Dorsolateral prefrontal cortex (tissue), 120 donors: ENCODE measurements at regions of chr9 and their contacts with region 1.

Region 1: DNA sequence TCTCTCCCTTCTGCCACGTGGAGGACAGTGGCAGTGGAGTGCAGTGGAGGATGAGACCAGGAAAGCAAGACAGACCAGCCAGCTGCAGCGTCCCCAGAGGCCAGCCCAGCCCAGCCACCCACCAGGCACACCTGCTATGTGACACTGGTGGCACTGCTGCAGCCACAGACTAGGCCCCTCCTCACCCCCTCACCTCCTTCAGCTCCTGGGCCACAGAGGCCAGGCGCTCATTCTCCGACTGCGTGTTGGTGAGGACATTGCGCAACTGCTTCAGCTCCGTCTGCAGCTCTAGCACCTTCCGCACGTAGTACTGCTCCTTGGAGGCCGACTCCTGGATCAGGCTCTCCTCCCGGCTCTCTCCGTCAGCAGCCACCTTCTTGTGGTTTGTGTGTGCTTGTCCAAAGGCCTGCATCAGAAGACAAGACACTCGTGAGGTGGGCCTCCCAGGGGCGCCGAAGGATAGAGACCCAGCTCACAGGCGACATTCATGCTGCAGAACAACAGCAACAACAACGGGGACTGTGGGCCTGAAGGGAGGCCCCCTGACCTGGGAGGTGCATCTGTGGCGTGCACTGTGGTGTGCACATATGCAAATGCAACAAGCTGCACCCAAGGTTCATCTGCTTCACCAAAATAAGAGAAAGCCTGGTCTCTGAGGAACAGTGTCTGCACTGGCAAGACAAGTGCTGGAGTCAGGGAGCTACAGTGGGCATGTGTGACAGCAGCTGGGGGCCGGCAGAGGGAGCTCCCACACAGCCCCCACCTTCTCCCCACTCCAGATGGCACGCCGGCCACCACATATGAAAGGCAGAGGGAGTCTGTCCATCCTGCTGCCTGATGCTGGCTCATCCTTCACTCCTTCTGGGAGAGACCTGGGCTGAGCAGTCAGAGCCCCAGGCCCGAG is 35.5 kb downstream of the BICD2 start:
- DNase-seq: peak in 7 of 10 donors; percentile 35 to 75 (median 63)
- H3K4me3 ChIP-seq: peak overlapping the region in 1 of 59 donors; percentile 5
- H3K27ac ChIP-seq: peak overlapping the region in 52 of 59 donors; percentile 1 to 83 (median 52)
- H3K27me3 ChIP-seq: no peaks in the 10 kb centered on the region
- CTCF ChIP-seq: peak in 53 of 56 donors; percentile 27 to 86 (median 63)

Region 2: GRCh38 chr9:92760070-92760469 is 31.0 kb after region 1 on chr9:
- intact Hi-C with region 1: loop called (anchors 2 to 5 kb)
- DNase-seq: peak; percentile 61 to 88 (median 82)
- H3K4me3 ChIP-seq: peak overlapping the region in 6 of 59 donors; percentile 3 to 20 (median 13)
- H3K27ac ChIP-seq: peak overlapping the region in 17 of 59 donors; percentile 2 to 79 (median 32)
- H3K27me3 ChIP-seq: no peaks in the 10 kb centered on the region
- CTCF ChIP-seq: no peak

Region 3: DNA sequence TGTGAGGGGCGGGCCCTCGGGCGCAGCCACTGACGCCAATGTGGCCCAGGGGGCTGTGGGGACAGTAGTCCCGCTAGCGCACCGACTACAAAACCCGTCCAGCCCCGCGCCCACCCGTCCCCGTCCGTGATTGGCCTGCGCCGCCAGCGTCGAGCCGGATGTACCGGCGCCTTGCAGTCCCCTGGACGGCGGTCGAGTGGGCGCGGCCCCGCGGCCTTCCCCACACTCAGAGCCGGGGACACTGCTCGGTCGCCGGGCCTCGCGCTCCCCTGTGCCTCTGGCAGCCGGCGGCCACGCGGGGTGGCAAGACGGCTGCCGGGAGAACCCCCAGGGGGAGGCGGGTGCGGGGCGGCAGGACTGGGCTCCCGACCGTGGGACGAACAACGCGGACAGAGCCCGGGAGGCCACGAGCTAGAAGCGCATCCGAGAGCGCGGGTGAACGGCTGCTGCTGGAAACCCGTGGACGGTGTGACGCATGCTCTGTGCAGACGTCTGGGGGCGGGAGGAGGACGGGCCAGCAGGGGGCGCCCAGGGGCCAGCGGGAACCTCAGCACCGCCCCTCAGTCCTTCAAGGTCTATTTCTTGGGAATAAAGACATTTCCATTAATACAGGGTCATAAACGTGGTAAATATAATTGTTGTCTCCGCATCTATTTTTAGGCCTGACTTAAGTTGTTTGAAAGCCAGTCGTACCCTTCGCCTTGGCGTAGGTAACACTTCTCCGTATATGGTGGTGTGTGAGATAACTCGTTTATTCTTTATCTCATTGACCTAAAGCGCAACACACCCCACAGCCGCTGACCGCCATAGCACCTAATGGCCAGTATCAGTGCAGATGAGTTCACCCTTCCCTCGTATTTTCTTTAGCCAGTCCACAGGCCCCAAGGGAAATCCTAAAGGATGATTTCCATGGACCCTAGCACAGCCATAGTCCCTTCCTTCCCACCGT is 36.2 kb after region 1 on chr9:
- intact Hi-C with region 1: loop called (anchors 2 to 5 kb)
- DNase-seq: peak; percentile 97 to 100 (median 99)
- H3K4me3 ChIP-seq: peak overlapping the region; percentile 45 to 99 (median 91)
- H3K27ac ChIP-seq: peak overlapping the region; percentile 81 to 100 (median 98)
- H3K27me3 ChIP-seq: no peaks in the 10 kb centered on the region
- CTCF ChIP-seq: peak; percentile 77 to 99 (median 93)